WTC11 (cell line): ENCODE measurements at regions of chr12 and their contacts with region 1.

Region 1: DNA sequence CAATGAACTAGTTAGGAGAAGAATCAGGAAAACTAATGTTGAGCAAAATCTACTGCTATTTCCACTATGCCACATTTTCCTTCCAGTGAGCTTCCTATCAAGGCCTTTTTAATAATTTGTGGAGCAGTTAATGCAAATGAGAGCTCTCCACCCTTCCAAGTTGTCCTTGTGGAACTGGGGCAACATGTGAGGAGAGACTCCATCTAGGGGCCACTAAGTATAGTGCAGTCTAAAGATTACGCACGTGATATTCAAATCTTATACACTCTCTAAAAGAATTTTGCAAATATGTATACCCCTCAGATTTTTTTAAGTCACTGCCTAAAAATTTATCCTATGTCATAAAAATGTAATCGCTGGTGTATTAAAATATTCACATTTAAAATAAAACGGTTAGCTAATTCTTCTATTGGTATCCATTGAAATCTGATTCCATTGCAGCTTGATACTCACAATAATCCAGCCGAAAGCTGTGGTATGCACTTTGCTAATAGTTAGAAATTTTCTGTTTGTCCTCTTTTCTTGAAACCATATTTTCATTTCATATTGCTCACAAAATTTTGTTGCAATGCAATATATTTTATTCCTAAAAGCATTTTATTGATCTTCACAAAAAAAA is 100.1 kb downstream of the PAH start:
- DNase-seq: no peak
- ATAC-seq: peak; percentile 90
- H3K4me3 Mint-ChIP-seq: no peak overlapping the region
- H3K27ac Mint-ChIP-seq: no peak overlapping the region
- H3K4me1 Mint-ChIP-seq: peaks cover 6% of the 10 kb centered on the region
- H3K27me3 Mint-ChIP-seq: peaks cover 7% of the 10 kb centered on the region
- CTCF ChIP-seq: peak; percentile 82

Region 2: GRCh38 chr12:102806110-102806509 is 10.8 kb before region 1 on chr12:
- CTCF ChIA-PET with region 1: interaction called, 24 read pairs
- POLR2A ChIA-PET with region 1: no interaction called
- DNase-seq: no peak
- ATAC-seq: no peak
- H3K4me3 Mint-ChIP-seq: no peak overlapping the region
- H3K27ac Mint-ChIP-seq: no peak overlapping the region
- H3K4me1 Mint-ChIP-seq: peaks cover 7% of the 10 kb centered on the region
- H3K27me3 Mint-ChIP-seq: no peaks in the 10 kb centered on the region; the same call in 1 of the 2 replicates
- CTCF ChIP-seq: no peak